Activated B cell treated with CpG ODN at 0.5 μM for 24 hours (primary cell): ENCODE measurements at regions of chr11 and their contacts with region 1.

Region 1: GRCh38 chr11:104918113-104918824 is 20.0 kb upstream of the CASP12 start:
- DNase-seq: no peak
- ATAC-seq: peak; percentile 69
- H3K4me3 Mint-ChIP-seq: peak overlapping the region; percentile 87
- H3K27ac Mint-ChIP-seq: peak overlapping the region; percentile 92
- H3K4me1 Mint-ChIP-seq: peaks cover 74% of the 10 kb centered on the region
- H3K27me3 Mint-ChIP-seq: no peaks in the 10 kb centered on the region
- CTCF ChIP-seq: no peak

Region 2: GRCh38 chr11:104897891-104898684 is 20.2 kb before region 1 on chr11 and contains the start of gene CASP12:
- CTCF ChIA-PET with region 1: no interaction called
- POLR2A ChIA-PET with region 1: no interaction called
- intact Hi-C with region 1: loop called (anchors 2 kb)
- DNase-seq: no peak
- ATAC-seq: peak; percentile 5
- H3K4me3 Mint-ChIP-seq: peak within 1 kb of the TSS; percentile 54
- H3K27ac Mint-ChIP-seq: peak within 1 kb of the TSS; percentile 42
- H3K4me1 Mint-ChIP-seq: peaks cover 32% of the 10 kb centered on the region
- H3K27me3 Mint-ChIP-seq: no peaks in the 10 kb centered on the region
- CTCF ChIP-seq: no peak
- total RNA-seq, gene CASP12: not detected in 2 replicates

Region 3: GRCh38 chr11:104934594-104934993 is 16.3 kb after region 1 on chr11:
- CTCF ChIA-PET with region 1: no interaction called
- POLR2A ChIA-PET with region 1: no interaction called
- intact Hi-C with region 1: loop called (anchors 2 kb)
- DNase-seq: no peak
- ATAC-seq: no peak
- H3K4me3 Mint-ChIP-seq: peak overlapping the region; percentile 61
- H3K27ac Mint-ChIP-seq: peak overlapping the region; percentile 72
- H3K4me1 Mint-ChIP-seq: peaks cover 66% of the 10 kb centered on the region
- H3K27me3 Mint-ChIP-seq: no peaks in the 10 kb centered on the region
- CTCF ChIP-seq: no peak

Region 4: DNA sequence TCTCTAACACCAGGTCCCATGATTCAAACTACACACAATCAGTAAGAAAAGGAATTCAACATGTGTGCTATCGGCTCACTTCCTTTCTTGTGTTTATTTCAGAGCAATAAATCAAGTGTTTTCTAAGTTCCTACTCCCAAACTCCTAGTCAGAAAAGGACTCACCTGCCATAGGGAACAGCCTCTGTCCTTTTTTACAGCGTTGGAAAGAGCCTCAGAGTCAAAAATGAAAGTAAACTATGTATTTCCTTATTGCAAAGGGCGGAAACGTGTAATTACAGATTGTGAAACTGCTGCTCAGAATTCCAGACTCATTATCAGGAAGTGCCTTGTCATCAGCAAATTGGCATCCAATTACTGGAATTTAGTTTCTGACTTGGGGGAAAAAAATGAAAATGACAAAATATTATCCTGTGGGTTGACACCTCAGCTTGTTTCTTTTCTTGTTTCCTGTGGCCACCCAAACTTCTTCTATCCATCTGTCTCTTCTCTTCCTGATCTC is 50.1 kb after region 1 on chr11 and contains the start of gene CASP4:
- CTCF ChIA-PET with region 1: no interaction called
- POLR2A ChIA-PET with region 1: interaction called, 4 read pairs
- intact Hi-C with region 1: loop called (anchors 5 kb)
- DNase-seq: no peak
- ATAC-seq: peak; percentile 85
- H3K4me3 Mint-ChIP-seq: peak within 1 kb of the TSS; percentile 94
- H3K27ac Mint-ChIP-seq: peak within 1 kb of the TSS; percentile 94
- H3K4me1 Mint-ChIP-seq: peaks cover 41% of the 10 kb centered on the region
- H3K27me3 Mint-ChIP-seq: no peaks in the 10 kb centered on the region
- CTCF ChIP-seq: no peak
- total RNA-seq, gene CASP4: 87.8 and 88.7 TPM in 2 replicates

Region 5: GRCh38 chr11:105057432-105057831 is 139.2 kb after region 1 on chr11:
- CTCF ChIA-PET with region 1: no interaction called
- POLR2A ChIA-PET with region 1: no interaction called
- intact Hi-C with region 1: no loop called
- DNase-seq: no peak
- ATAC-seq: no peak
- H3K4me3 Mint-ChIP-seq: no peak overlapping the region
- H3K27ac Mint-ChIP-seq: no peak overlapping the region
- H3K4me1 Mint-ChIP-seq: no peaks in the 10 kb centered on the region
- H3K27me3 Mint-ChIP-seq: peaks cover 3% of the 10 kb centered on the region
- CTCF ChIP-seq: no peak